Adrenal gland (tissue), 19 donors: ENCODE measurements at regions of chr1 and their contacts with region 1.

Region 1: GRCh38 chr1:207077470-207078377 is 10.9 kb upstream of the C4BPB start:
- DNase-seq: peak; percentile 62 to 85 (median 76)
- H3K4me3 ChIP-seq: no peak overlapping the region
- H3K27ac ChIP-seq: no peak overlapping the region
- H3K4me1 ChIP-seq: no peaks in the 10 kb centered on the region
- H3K27me3 ChIP-seq: no peaks in the 10 kb centered on the region
- CTCF ChIP-seq: peak; percentile 85 to 91 (median 88)
- POLR2A ChIP-seq: no peak

Region 2: GRCh38 chr1:206878456-206878855 is 199.3 kb before region 1 on chr1:
- intact Hi-C with region 1: no loop called
- DNase-seq: no peak
- H3K4me3 ChIP-seq: no peak overlapping the region
- H3K27ac ChIP-seq: no peak overlapping the region
- H3K4me1 ChIP-seq: no peaks in the 10 kb centered on the region
- H3K27me3 ChIP-seq: no peaks in the 10 kb centered on the region
- CTCF ChIP-seq: no peak
- POLR2A ChIP-seq: no peak

Region 3: DNA sequence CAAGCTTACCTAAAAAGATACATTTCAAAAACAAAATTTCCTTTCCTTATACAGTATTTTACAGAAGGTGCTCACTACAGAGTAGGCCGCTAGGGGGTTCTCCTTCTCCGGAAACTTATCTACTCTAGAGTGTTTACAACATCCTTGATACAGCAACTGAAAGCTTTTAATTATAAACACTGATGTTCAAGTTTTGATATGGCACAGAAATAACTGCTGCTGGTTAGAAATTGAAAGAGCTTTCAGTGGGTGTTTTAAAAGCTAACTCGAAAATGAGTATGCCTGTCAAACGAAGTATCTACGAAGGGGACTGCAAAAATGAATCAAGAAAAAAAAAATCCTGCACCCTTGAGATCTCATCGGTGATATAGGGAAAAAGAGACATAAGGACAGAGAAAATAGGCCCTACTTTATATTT is 27.7 kb before region 1 on chr1:
- intact Hi-C with region 1: loop called in 1 of 2 experiments (anchors 2 kb)
- DNase-seq: peak in 5 of 7 donors; percentile 54 to 82 (median 56)
- H3K4me3 ChIP-seq: peak overlapping the region; percentile 39 to 80 (median 65)
- H3K27ac ChIP-seq: peak overlapping the region; percentile 86 to 95 (median 92)
- H3K4me1 ChIP-seq: peaks cover 7 to 76% of the 10 kb centered on the region in 2 donors
- H3K27me3 ChIP-seq: no peaks in the 10 kb centered on the region
- CTCF ChIP-seq: peak; percentile 60 to 85 (median 72)
- POLR2A ChIP-seq: no peak

Region 4: GRCh38 chr1:208211921-208212843 is 1134.5 kb after region 1 on chr1:
- intact Hi-C with region 1: no loop called
- DNase-seq: peak in 3 of 7 donors; percentile 41 to 64 (median 43)
- H3K4me3 ChIP-seq: no peak overlapping the region
- H3K27ac ChIP-seq: no peak overlapping the region
- H3K4me1 ChIP-seq: peaks cover 0 to 6% of the 10 kb centered on the region in 2 donors
- H3K27me3 ChIP-seq: no peaks in the 10 kb centered on the region
- CTCF ChIP-seq: no peak
- POLR2A ChIP-seq: no peak